ENCODE measurements at regions of chr14 and their contacts with region 1.

Region 1: DNA sequence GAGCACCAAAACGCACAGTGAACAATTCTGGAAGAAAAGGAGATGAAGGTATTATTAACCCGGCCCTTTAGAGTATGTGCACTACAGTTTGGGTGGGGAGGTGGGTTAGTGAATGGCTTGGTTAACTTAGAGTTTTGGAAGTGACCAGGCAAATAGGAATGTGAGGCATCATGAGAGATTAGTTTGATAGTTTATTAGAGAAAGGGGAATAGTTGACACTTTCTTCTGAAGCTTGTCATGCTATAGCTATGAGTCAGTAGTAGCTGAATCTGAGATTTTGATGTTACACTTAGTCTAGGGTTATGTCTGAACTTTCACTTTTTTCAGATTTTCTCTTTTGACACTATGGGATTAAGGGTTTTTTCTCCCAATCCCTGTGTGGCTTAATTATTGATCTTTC is 567.2 kb downstream of the SNAPC1 start:
- DNase-seq: no peak
- H3K4me3 ChIP-seq: no peak overlapping the region
- H3K27ac ChIP-seq: no peak overlapping the region
- H3K4me1 ChIP-seq: no peaks in the 10 kb centered on the region
- H3K27me3 ChIP-seq: no peaks in the 10 kb centered on the region
- CTCF ChIP-seq: no peak

Region 2: DNA sequence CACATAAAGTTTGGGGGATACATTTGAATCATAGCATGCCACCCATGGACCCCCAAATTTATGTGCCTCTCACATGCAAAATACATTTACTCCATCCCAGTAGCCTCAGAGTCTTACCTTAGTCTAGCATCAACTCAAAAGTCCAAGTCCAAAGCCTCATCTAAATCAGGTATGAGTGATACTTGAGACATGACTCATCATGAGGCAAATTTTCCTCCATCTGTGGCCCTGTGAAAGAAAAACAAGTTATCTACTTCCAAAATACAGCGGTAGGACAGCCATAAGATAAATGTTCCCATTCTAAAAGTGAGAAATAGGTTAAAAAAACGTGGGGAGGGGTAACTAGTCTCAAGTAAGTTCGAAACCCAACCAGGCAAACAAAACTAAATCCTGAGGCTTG is 123.0 kb before region 1 on chr14:
- intact Hi-C with region 1: no loop called
- DNase-seq: no peak
- H3K4me3 ChIP-seq: no peak overlapping the region
- H3K27ac ChIP-seq: no peak overlapping the region
- H3K4me1 ChIP-seq: no peaks in the 10 kb centered on the region
- H3K27me3 ChIP-seq: no peaks in the 10 kb centered on the region
- CTCF ChIP-seq: no peak

Region 3: GRCh38 chr14:62558451-62558850 is 229.0 kb after region 1 on chr14:
- intact Hi-C with region 1: loop called (anchors 10 kb)
- DNase-seq: no peak
- H3K4me3 ChIP-seq: no peak overlapping the region
- H3K27ac ChIP-seq: no peak overlapping the region
- H3K4me1 ChIP-seq: no peaks in the 10 kb centered on the region
- H3K27me3 ChIP-seq: no peaks in the 10 kb centered on the region
- CTCF ChIP-seq: no peak